MCF 10A (cell line): ENCODE measurements at regions of chr4 and their contacts with region 1.

Region 1: DNA sequence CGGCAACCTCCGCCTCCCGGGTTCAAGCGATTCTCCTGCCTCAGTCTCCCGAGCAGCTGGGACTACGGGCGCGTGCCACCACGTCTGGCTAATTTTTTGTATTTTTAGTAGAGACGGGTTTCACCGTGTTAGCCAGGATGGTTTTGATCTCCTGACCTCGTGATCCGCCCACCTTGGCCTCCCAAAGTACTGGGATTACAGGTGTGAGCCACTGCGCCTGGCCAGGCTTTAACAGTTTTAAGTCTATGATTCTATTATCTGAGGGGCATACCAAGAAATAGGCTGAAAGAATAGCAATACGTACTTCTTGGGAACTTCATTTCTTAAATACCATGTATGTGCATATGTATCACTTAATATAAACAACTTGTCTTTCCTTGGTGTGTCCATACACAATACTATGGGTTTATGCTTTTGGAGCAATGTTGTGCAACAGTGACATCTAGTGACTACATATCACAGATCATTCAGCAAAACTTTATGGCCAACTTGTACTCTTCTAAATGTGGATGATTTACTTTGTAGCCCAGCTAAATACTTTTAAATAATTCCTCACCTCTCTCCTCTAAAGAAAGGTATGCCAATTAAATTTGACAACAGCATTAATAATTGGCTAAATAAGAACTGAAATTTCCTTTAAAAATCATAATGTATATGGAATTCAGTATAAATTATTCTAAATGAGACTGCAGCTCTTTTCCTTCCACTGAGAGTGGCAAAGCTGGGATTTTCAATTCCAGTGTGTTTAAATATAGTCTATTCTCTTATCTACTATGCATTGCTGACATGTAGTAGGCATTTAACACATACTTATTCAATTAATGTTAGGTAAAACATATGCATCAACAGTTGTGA is 10.4 kb downstream of the SLC9B1 start:
- DNase-seq: peak; percentile 80
- H3K4me3 Mint-ChIP-seq: no peak overlapping the region
- H3K27ac Mint-ChIP-seq: no peak overlapping the region
- H3K4me1 Mint-ChIP-seq: peaks cover 26% of the 10 kb centered on the region
- H3K27me3 Mint-ChIP-seq: peaks cover 9% of the 10 kb centered on the region
- CTCF ChIP-seq: peak; percentile 75

Region 2: GRCh38 chr4:102285831-102286230 is 723.3 kb before region 1 on chr4:
- CTCF ChIA-PET with region 1: no interaction called
- POLR2A ChIA-PET with region 1: no interaction called
- intact Hi-C with region 1: no loop called
- DNase-seq: peak; percentile 61
- H3K4me3 Mint-ChIP-seq: no peak overlapping the region
- H3K27ac Mint-ChIP-seq: no peak overlapping the region
- H3K4me1 Mint-ChIP-seq: no peaks in the 10 kb centered on the region
- H3K27me3 Mint-ChIP-seq: no peaks in the 10 kb centered on the region
- CTCF ChIP-seq: no peak

Region 3: DNA sequence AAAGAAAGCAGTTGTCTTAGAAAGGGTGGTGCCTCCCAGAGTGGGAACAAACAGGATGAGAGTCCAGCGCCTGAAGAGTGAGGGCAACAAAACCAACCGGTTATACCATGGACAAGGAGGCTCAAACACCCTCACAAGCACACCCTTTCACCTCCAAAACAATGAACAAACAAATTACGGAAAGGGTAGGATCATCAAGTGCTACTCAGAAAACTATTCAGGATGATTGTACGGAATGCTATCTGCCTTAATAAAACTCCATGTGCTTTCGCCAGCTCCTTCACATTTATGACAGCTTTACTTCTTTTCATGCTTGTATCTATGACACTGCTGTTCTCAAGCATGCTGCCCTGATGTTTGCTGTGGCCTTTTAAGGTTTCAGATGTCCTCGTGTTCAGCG is 690.6 kb before region 1 on chr4:
- CTCF ChIA-PET with region 1: no interaction called
- POLR2A ChIA-PET with region 1: no interaction called
- intact Hi-C with region 1: no loop called
- DNase-seq: no peak
- H3K4me3 Mint-ChIP-seq: no peak overlapping the region
- H3K27ac Mint-ChIP-seq: no peak overlapping the region
- H3K4me1 Mint-ChIP-seq: peaks cover 11% of the 10 kb centered on the region
- H3K27me3 Mint-ChIP-seq: no peaks in the 10 kb centered on the region
- CTCF ChIP-seq: no peak

Region 4: DNA sequence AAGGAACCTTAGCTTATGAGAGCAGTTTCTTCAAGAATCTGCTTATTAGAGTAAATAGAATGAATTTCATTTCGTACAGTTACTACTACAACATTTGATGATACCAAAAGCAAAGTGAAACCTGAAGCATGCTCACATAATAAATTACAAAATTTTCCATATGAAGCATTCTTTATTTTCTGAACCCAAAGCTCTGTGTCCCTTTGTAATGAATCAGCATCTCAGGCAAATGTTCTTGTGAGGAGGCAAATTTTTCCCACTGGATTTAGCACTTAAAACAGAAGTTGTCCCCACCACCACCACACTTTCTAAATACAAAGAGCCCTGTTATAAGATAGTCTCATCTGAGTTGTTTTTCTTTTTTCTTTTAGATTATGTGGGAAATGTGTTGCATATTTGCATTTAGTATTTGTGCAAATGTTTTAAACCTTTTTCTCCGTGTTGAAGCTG is 578.6 kb before region 1 on chr4:
- CTCF ChIA-PET with region 1: interaction called, 3 read pairs
- POLR2A ChIA-PET with region 1: interaction called, 3 read pairs
- intact Hi-C with region 1: loop called (anchors 5 kb)
- DNase-seq: peak; percentile 35
- H3K4me3 Mint-ChIP-seq: peak overlapping the region; percentile 81
- H3K27ac Mint-ChIP-seq: peak overlapping the region; percentile 73
- H3K4me1 Mint-ChIP-seq: peaks cover 11% of the 10 kb centered on the region
- H3K27me3 Mint-ChIP-seq: no peaks in the 10 kb centered on the region
- CTCF ChIP-seq: no peak

Region 5: DNA sequence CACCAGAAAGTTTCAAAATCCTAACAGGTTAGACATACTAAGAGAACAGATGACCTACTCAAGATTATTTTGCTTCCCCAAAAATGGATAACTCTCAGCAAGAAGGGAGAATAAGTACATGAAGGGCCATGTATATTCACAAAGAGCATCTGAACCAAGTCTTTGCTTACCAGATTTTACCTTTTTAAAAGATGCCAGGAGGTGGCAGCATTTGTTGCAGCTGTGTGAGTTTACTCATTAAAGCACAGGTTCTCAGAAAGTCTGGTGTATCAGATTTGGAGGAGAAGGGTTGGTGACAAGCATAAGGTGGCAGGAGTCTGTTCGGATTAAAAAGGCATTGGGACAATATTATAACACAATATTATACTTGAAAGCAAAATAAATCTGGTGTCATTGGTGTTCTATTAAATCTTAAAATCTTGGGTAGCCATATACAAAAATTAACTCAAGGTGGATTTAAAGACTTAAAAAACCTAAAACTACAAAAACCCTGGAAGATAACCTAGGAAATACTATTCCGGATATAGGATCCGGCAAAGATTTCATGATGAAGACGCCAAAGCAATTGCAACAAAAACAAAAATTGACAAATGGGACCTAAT is 559.2 kb before region 1 on chr4:
- CTCF ChIA-PET with region 1: interaction called, 3 read pairs
- POLR2A ChIA-PET with region 1: no interaction called
- intact Hi-C with region 1: loop called (anchors 1 kb)
- DNase-seq: peak; percentile 72
- H3K4me3 Mint-ChIP-seq: no peak overlapping the region
- H3K27ac Mint-ChIP-seq: no peak overlapping the region
- H3K4me1 Mint-ChIP-seq: no peaks in the 10 kb centered on the region
- H3K27me3 Mint-ChIP-seq: no peaks in the 10 kb centered on the region
- CTCF ChIP-seq: peak; percentile 63

Region 6: GRCh38 chr4:102799816-102800215 is 209.3 kb before region 1 on chr4:
- CTCF ChIA-PET with region 1: interaction called, 12 read pairs
- POLR2A ChIA-PET with region 1: no interaction called
- intact Hi-C with region 1: no loop called
- DNase-seq: no peak
- H3K4me3 Mint-ChIP-seq: no peak overlapping the region
- H3K27ac Mint-ChIP-seq: no peak overlapping the region
- H3K4me1 Mint-ChIP-seq: peaks cover 14% of the 10 kb centered on the region
- H3K27me3 Mint-ChIP-seq: no peaks in the 10 kb centered on the region
- CTCF ChIP-seq: no peak

Region 7: DNA sequence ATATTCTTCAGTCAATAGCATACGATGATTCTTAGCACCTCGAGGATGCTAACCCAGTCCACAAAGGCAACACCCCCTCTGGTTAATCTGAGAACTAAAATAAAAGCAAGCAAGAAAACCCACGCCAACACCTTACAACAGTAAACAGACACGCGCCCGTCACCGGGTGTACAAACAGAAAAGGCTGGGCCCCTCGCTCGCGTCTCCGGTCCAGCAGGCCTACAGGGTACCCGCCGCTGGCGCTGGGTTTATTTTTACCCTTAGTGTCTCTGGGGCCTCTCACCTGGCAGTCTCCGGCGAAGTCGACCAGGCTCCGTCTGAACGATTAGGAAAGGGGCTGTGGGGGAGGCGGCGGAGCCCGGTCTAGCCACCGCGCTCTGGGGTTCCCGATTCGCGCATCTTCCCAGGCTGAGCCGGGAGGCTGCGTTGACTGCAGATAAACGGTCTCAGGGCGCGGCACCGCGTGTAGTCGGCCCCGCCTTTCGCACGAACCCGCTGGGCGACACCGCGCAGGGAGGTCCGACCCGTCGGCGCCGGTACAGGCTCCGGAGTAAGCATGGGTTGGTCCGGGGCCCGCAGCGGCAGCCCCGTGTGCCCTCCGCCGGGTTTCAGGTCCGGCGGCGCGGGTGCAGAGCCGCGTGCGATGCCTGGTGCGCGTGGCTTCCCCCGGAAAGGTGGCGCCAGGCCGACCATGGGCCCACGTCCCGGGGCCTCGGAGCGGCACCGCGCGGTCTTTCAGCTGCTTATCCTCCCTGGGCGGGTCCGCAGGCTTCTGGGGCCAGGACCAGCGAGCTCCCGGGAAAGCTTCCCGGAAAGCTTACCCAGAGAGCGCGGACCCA is 67.0 kb after region 1 on chr4:
- CTCF ChIA-PET with region 1: interaction called, 3 read pairs
- POLR2A ChIA-PET with region 1: interaction called, 19 read pairs
- intact Hi-C with region 1: no loop called
- DNase-seq: peak; percentile 74
- H3K4me3 Mint-ChIP-seq: peak overlapping the region; percentile 93
- H3K27ac Mint-ChIP-seq: peak overlapping the region; percentile 92
- H3K4me1 Mint-ChIP-seq: peaks cover 20% of the 10 kb centered on the region
- H3K27me3 Mint-ChIP-seq: no peaks in the 10 kb centered on the region
- CTCF ChIP-seq: no peak